ENCODE measurements at regions of chr19 and their contacts with region 1.

Region 1: DNA sequence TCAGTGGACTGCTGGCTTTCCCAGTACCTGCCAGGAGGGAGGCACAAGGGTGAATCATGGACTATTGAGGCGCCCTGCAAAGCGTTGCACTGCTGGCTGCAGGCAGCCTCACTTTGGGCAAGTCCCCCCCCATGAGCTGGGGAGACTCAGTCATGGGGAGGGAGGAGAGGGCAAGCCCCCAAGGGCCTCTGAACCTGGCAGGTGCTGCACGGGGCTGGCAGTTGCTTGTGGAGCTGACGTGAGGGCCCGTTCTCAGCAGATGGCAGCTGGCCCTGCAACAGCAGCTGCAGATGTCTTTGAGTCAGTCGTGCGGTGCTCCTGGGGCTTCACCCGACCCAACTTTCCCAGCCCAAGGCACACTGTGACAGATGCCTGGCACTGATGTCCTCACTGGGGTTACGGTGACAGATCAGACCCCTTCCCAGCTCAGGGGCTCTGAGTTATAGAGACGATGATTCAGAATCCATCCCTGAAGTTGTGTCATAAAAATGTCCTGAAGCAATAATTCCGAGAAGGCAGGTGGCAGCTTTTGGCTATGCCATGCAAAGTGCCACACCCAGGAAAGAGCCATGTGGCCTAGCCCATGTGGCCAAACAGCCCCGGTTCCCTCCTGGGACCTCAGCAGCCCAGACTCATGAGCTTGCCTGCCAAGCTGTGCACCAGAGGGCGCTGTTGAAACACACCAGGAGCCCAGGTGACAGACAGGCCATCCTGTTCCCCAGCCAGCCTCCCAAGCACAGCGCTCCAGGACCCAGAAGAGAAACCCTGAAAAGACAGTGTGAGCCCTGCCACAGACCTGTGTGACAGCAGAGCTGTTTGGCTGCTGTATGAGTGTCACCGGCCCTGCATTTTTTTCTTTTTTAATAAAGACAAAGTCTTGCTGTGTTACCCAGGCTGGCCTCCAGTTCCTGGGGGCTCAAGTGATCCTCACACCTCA is 53.6 kb upstream of the LDLR start:
- DNase-seq: peak; percentile 94 to 97
- ATAC-seq: peak; percentile 93
- H3K4me3 ChIP-seq: no peak overlapping the region
- H3K27ac ChIP-seq: peak overlapping the region in 1 of 2 donors; percentile 46
- H3K4me1 ChIP-seq: no peaks in the 10 kb centered on the region
- H3K27me3 ChIP-seq: no peaks in the 10 kb centered on the region

Region 2: GRCh38 chr19:10936661-10937084 is 99.0 kb before region 1 on chr19:
- intact Hi-C with region 1: loop called in 1 of 2 experiments (anchors 5 kb)
- DNase-seq: no peak
- ATAC-seq: peak; percentile 73
- H3K4me3 ChIP-seq: no peak overlapping the region
- H3K27ac ChIP-seq: no peak overlapping the region
- H3K4me1 ChIP-seq: no peaks in the 10 kb centered on the region
- H3K27me3 ChIP-seq: no peaks in the 10 kb centered on the region

Region 3: GRCh38 chr19:10960314-10961072 is 75.2 kb before region 1 on chr19 and contains the start of gene SMARCA4:
- intact Hi-C with region 1: no loop called
- DNase-seq: peak; percentile 98 to 99
- ATAC-seq: peak; percentile 97
- H3K4me3 ChIP-seq: peak within 1 kb of the TSS; percentile 50 to 94
- H3K27ac ChIP-seq: peak within 1 kb of the TSS in 1 of 2 donors; percentile 72
- H3K4me1 ChIP-seq: no peaks in the 10 kb centered on the region
- H3K27me3 ChIP-seq: no peaks in the 10 kb centered on the region
- total RNA-seq, gene SMARCA4: 65.0 to 67.4 TPM

Region 4: DNA sequence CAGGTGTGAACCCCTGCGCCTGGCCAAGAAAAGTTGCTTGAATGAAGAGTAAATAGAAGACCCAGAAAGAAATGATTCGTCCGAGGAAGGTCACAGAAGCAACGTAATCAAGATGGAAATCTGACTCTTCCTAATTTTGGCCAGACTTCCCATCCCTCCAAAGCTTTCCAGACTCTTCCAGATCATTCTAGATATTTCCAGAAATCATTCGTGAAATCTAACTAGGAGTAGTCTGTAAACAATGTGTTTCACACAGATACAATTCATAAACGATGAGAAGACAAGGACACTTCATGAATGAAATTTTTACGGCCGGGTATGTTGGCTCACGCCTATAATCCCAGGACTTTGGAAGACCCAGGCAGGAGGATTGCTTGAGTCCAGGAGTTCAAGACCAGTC is 44.3 kb after region 1 on chr19:
- intact Hi-C with region 1: loop called in 1 of 2 experiments (anchors 5 kb)
- DNase-seq: no peak
- ATAC-seq: no peak
- H3K4me3 ChIP-seq: no peak overlapping the region
- H3K27ac ChIP-seq: no peak overlapping the region
- H3K4me1 ChIP-seq: peaks cover 0 to 2% of the 10 kb centered on the region in 2 donors
- H3K27me3 ChIP-seq: no peaks in the 10 kb centered on the region

Region 5: DNA sequence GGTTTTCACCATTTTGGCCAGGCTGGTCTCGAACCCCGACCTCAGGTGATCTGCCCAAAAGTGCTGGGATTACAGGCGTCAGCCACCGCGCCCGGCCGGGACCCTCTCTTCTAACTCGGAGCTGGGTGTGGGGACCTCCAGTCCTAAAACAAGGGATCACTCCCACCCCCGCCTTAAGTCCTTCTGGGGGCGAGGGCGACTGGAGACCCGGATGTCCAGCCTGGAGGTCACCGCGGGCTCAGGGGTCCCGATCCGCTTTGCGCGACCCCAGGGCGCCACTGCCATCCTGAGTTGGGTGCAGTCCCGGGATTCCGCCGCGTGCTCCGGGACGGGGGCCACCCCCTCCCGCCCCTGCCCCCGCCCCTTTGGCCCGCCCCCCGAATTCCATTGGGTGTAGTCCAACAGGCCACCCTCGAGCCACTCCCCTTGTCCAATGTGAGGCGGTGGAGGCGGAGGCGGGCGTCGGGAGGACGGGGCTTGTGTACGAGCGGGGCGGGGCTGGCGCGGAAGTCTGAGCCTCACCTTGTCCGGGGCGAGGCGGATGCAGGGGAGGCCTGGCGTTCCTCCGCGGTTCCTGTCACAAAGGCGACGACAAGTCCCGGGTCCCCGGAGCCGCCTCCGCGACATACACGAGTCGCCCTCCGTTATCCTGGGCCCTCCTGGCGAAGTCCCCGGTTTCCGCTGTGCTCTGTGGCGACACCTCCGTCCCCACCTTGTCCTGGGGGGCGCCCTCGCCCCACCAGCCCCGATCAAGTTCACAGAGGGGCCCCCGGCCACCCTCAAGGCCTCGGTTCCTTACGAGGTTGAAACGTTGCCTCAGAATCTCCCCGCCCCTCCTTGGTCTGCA is 54.6 kb after region 1 on chr19:
- intact Hi-C with region 1: loop called in 1 of 2 experiments (anchors 5 kb)
- DNase-seq: peak; percentile 99
- ATAC-seq: peak; percentile 92
- H3K4me3 ChIP-seq: peak overlapping the region; percentile 30 to 40
- H3K27ac ChIP-seq: peak overlapping the region; percentile 23 to 89
- H3K4me1 ChIP-seq: no peaks in the 10 kb centered on the region
- H3K27me3 ChIP-seq: no peaks in the 10 kb centered on the region

Region 6: GRCh38 chr19:11111117-11111774 is 75.5 kb after region 1 on chr19:
- intact Hi-C with region 1: loop called in 1 of 2 experiments (anchors 5 kb)
- DNase-seq: no peak
- ATAC-seq: no peak
- H3K4me3 ChIP-seq: no peak overlapping the region
- H3K27ac ChIP-seq: no peak overlapping the region
- H3K4me1 ChIP-seq: no peaks in the 10 kb centered on the region
- H3K27me3 ChIP-seq: no peaks in the 10 kb centered on the region

Region 7: DNA sequence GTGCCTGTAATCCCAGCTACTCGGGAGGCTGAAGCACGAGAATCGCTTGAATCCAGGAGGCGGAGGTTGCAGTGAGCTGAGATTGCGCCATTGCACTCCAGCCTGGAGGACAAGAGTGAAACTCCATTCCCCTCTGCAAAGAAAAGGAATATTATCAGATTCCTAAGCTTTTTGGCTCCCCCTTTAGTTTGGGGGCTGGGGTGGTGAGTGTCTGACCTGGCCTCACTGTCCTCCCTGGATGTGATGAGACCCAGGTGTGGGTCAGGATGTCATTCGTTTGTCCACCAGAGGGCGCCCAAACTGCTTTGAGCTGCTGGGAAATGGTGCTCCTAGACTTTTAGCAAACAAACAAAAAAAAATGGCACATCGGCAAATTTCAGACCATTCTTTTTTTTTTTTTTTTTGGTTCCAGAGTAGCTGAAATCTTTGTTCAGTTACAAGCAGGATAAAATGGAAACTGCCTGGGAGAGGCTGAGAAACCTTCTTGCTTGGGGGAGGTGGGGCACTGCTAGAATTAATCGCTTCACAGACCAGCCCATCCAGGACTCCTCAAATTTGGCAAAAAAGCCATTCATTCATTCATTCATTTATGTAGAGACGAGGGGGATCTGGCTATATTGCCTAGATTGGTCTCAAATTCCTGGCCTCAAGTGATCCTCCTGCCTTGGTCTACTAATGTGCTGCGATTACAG is 90.4 kb after region 1 on chr19:
- intact Hi-C with region 1: loop called (anchors 2 kb)
- DNase-seq: peak; percentile 87 to 91
- ATAC-seq: peak; percentile 87
- H3K4me3 ChIP-seq: no peak overlapping the region
- H3K27ac ChIP-seq: no peak overlapping the region
- H3K4me1 ChIP-seq: no peaks in the 10 kb centered on the region
- H3K27me3 ChIP-seq: no peaks in the 10 kb centered on the region

Region 8: DNA sequence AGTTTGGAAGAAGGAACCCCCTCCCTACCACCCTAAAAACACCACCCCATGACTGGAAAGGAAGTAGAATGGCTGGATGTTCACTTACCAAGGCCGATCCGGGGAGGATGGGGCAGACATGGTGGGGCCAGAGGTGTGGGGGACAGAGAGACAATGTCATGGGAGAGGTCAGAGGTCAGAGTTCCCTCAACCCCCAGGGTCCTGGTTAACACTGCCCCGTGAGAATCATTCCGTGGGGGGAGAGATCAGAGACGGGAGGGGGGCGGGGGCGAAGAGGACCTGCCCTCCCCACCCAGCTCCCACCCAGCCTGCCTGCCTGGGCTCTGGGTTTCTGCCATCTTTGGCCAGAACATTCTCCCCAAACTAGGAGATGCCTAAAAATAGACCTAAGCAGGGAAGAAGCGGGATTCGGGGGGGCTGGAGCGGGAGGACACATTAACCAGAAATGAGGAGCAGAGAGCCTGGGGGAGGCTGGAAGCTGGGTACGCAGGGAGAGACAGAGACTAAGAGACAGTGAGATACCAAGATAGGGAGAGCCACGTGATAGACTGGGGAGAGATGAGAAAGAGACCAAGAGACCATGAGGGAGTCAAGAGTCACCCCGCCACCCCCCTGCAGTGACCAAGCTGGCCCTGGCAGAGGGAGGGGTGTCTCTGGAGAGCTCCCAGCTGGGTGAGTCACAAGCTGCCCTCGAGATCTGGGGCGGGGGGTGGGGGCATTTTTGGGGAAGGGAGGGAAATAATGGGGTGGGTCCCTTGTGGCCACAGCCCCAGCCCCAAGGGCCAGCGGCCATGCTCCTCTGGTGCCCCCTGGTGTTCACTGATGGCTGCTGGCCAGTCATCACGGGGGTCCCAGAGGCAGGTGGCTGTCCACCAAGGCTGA is 167.7 kb after region 1 on chr19:
- intact Hi-C with region 1: loop called (anchors 2 to 5 kb)
- DNase-seq: peak; percentile 91 to 94
- ATAC-seq: peak; percentile 83
- H3K4me3 ChIP-seq: no peak overlapping the region
- H3K27ac ChIP-seq: peak overlapping the region; percentile 71 to 83
- H3K4me1 ChIP-seq: no peaks in the 10 kb centered on the region
- H3K27me3 ChIP-seq: no peaks in the 10 kb centered on the region

Region 9: GRCh38 chr19:11293433-11294389 is 258.0 kb after region 1 on chr19:
- intact Hi-C with region 1: no loop called
- DNase-seq: peak; percentile 98 to 99
- ATAC-seq: peak; percentile 98
- H3K4me3 ChIP-seq: no peak overlapping the region
- H3K27ac ChIP-seq: peak overlapping the region in 1 of 2 donors; percentile 52
- H3K4me1 ChIP-seq: no peaks in the 10 kb centered on the region
- H3K27me3 ChIP-seq: no peaks in the 10 kb centered on the region